Activated CD4-positive, alpha-beta T cell treated with anti-CD3 and anti-CD28 coated beads, Interleukin-2, amount 10 ng/mL, durations not matched to agents 7 days and 5 days (primary cell): ENCODE measurements at regions of chr1 and their contacts with region 1.

Region 1: DNA sequence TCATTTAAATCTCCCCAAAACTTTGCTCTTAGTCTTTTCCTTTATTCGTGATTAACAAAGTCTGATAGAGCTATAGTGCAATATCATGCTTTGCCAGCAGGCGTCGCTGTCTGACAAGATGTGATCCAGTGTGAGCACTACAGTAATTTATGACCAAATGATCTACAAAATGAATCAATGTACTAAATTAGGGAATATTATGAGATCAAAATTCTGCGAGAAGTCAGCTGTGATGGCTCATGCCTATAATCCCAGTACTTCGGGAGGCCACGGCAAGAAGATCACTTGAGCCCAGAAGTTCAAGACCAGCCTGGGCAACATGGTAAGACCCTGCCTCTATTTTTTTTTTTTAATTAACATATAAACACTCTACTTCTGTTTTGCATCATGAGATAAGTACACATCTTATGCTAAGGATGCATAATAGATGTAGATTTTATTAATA is 3.6 kb upstream of the SPSB1 start:
- DNase-seq: peak; percentile 87
- H3K4me3 Mint-ChIP-seq: no peak overlapping the region
- H3K27ac Mint-ChIP-seq: no peak overlapping the region
- H3K4me1 Mint-ChIP-seq: peaks cover 37% of the 10 kb centered on the region
- H3K27me3 Mint-ChIP-seq: no peaks in the 10 kb centered on the region

Region 2: GRCh38 chr1:9225468-9225785 is 63.7 kb before region 1 on chr1:
- CTCF ChIA-PET with region 1: no interaction called
- POLR2A ChIA-PET with region 1: no interaction called
- DNase-seq: no peak
- H3K4me3 Mint-ChIP-seq: no peak overlapping the region
- H3K27ac Mint-ChIP-seq: no peak overlapping the region
- H3K4me1 Mint-ChIP-seq: no peaks in the 10 kb centered on the region
- H3K27me3 Mint-ChIP-seq: peaks cover 6% of the 10 kb centered on the region

Region 3: GRCh38 chr1:9251501-9251900 is 37.6 kb before region 1 on chr1:
- CTCF ChIA-PET with region 1: no interaction called
- POLR2A ChIA-PET with region 1: no interaction called
- DNase-seq: no peak
- H3K4me3 Mint-ChIP-seq: no peak overlapping the region
- H3K27ac Mint-ChIP-seq: no peak overlapping the region
- H3K4me1 Mint-ChIP-seq: peaks cover 9% of the 10 kb centered on the region
- H3K27me3 Mint-ChIP-seq: no peaks in the 10 kb centered on the region

Region 4: DNA sequence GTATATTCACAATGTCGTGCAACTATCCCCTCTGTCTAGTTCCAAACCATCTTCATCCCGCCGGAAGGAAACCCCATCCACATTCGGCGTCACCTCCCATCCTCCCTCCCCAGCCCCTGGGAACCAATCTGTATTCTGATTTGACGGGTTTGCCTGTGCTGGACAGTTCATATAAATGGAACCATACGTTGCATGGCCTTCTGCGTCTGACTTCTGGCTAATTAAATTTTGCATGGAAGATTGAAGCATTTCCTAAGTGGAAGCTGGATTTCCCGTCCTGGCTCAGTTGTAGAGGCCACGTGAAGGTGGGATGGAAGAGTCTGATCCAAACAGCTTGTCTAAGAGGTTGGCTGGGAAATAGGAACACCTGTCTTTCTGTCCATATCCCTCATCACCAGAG is 18.2 kb after region 1 on chr1:
- CTCF ChIA-PET with region 1: interaction called, 11 read pairs
- POLR2A ChIA-PET with region 1: no interaction called
- DNase-seq: no peak
- H3K4me3 Mint-ChIP-seq: no peak overlapping the region
- H3K27ac Mint-ChIP-seq: no peak overlapping the region
- H3K4me1 Mint-ChIP-seq: peaks cover 5% of the 10 kb centered on the region
- H3K27me3 Mint-ChIP-seq: no peaks in the 10 kb centered on the region

Region 5: GRCh38 chr1:9362488-9362887 is 73.4 kb after region 1 on chr1:
- CTCF ChIA-PET with region 1: no interaction called
- POLR2A ChIA-PET with region 1: no interaction called
- DNase-seq: no peak
- H3K4me3 Mint-ChIP-seq: no peak overlapping the region
- H3K27ac Mint-ChIP-seq: no peak overlapping the region
- H3K4me1 Mint-ChIP-seq: no peaks in the 10 kb centered on the region
- H3K27me3 Mint-ChIP-seq: no peaks in the 10 kb centered on the region

Region 6: DNA sequence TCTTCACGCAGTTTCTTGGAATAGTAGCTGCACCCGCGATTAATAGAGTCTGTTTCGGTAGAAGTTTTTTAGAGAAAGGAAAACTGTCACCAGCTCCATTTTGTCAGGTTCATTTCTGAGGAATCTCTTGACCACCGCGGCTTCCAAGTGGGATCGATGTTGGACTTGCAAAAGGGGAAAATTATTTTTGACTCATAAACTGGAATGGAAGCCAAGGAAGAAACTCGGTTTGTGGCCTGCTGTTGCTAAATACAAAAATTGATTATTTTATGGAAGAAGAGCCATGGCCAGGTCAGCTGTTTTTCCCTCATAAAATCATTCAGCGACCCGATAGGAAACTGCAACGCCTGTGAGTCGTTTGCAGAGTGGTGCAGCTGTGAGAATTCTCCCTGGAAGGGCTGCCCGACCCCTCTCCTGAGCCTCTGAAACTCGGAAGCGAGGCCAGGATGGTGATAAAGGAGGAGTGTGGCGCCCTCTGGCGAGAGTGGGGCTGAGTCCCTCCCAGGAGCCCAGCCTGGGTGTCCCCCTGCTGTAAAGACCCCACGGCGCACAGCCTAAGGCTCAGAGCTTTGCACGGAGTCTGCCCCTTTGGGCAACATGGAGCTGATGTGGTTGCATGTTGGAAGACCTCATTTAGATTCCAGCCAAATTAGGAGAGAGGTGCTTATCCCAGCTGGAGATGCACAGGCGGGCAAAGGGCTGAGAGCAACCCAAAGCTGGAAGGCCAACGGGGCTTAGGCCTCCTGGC is 166.5 kb after region 1 on chr1:
- CTCF ChIA-PET with region 1: interaction called, 32 read pairs
- POLR2A ChIA-PET with region 1: no interaction called
- DNase-seq: peak; percentile 62
- H3K4me3 Mint-ChIP-seq: no peak overlapping the region
- H3K27ac Mint-ChIP-seq: no peak overlapping the region
- H3K4me1 Mint-ChIP-seq: no peaks in the 10 kb centered on the region
- H3K27me3 Mint-ChIP-seq: no peaks in the 10 kb centered on the region

Region 7: DNA sequence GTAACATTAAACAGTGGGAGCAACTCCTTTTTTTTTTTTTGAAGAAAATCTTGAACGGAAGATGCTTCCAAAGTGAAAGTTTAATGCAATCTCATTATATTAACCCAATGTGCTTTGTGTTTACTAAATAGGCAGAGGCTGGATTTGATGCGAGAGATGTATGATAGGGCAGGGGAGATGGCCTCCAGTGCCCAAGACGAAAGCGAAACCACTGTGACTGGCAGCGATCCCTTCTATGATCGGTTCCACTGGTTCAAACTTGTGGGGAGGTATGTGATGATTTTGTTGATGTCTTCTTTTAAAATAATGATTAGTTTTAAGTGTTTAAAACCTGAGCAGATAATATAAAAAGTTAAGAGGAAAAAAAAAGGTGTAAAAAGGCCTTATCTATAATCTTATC is 1035.5 kb after region 1 on chr1:
- CTCF ChIA-PET with region 1: no interaction called
- POLR2A ChIA-PET with region 1: no interaction called
- DNase-seq: no peak
- H3K4me3 Mint-ChIP-seq: peak overlapping the region; percentile 46
- H3K27ac Mint-ChIP-seq: peak overlapping the region; percentile 83
- H3K4me1 Mint-ChIP-seq: peaks cover 15% of the 10 kb centered on the region
- H3K27me3 Mint-ChIP-seq: no peaks in the 10 kb centered on the region